Caco-2 (cell line): ENCODE measurements at regions of chr4 and their contacts with region 1.

Region 1: GRCh38 chr4:54228056-54228527 is 1.0 kb upstream of the PDGFRA start:
- DNase-seq: peak; percentile 85 to 90
- H3K4me3 ChIP-seq: peak overlapping the region; percentile 64
- H3K4me3 Mint-ChIP-seq: peak overlapping the region; percentile 87
- H3K27ac Mint-ChIP-seq: peak overlapping the region; percentile 79
- H3K4me1 ChIP-seq: peaks cover 9% of the 10 kb centered on the region; the same call in 1 of the 2 replicates
- H3K4me1 Mint-ChIP-seq: peaks cover 13% of the 10 kb centered on the region
- H3K27me3 ChIP-seq: no peaks in the 10 kb centered on the region
- H3K27me3 Mint-ChIP-seq: no peaks in the 10 kb centered on the region
- CTCF ChIP-seq: peak; percentile 87 to 89

Region 2: DNA sequence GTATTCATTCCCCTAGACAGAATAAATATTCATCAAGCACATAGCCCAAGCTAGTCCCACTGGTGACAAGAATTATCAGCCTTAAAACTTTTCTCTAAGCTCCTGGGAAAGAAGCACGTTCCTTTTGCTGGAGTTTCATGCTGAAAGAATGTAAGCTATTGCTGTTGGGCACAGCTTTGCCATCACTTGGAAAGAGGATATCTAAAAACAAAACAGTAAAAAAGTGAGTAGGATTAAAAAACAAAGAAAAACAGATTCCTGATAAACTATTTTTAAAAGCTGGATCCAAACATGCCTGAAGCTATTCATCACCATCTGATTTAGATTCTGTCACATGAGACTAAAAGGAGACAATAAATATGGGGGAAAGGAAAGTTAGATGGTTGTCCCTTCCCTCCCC is 1039.1 kb before region 1 on chr4:
- CTCF ChIA-PET with region 1: no interaction called
- POLR2A ChIA-PET with region 1: no interaction called
- intact Hi-C with region 1: loop called (anchors 2 kb)
- DNase-seq: no peak
- H3K4me3 ChIP-seq: no peak overlapping the region
- H3K4me3 Mint-ChIP-seq: no peak overlapping the region
- H3K27ac Mint-ChIP-seq: no peak overlapping the region
- H3K4me1 ChIP-seq: peaks cover 30% of the 10 kb centered on the region
- H3K4me1 Mint-ChIP-seq: peaks cover 20% of the 10 kb centered on the region
- H3K27me3 ChIP-seq: no peaks in the 10 kb centered on the region
- H3K27me3 Mint-ChIP-seq: no peaks in the 10 kb centered on the region
- CTCF ChIP-seq: no peak

Region 3: GRCh38 chr4:53490965-53491622 is 737.0 kb before region 1 on chr4:
- CTCF ChIA-PET with region 1: no interaction called
- POLR2A ChIA-PET with region 1: no interaction called
- intact Hi-C with region 1: loop called (anchors 2 kb)
- DNase-seq: peak; percentile 49
- H3K4me3 ChIP-seq: no peak overlapping the region
- H3K4me3 Mint-ChIP-seq: no peak overlapping the region
- H3K27ac Mint-ChIP-seq: no peak overlapping the region
- H3K4me1 ChIP-seq: no peaks in the 10 kb centered on the region
- H3K4me1 Mint-ChIP-seq: no peaks in the 10 kb centered on the region
- H3K27me3 ChIP-seq: no peaks in the 10 kb centered on the region
- H3K27me3 Mint-ChIP-seq: no peaks in the 10 kb centered on the region
- CTCF ChIP-seq: peak; percentile 53 to 71

Region 4: GRCh38 chr4:53702334-53703266 is 525.5 kb before region 1 on chr4:
- CTCF ChIA-PET with region 1: interaction called, 5 read pairs
- POLR2A ChIA-PET with region 1: no interaction called
- intact Hi-C with region 1: loop called (anchors 2 kb)
- DNase-seq: no peak
- H3K4me3 ChIP-seq: no peak overlapping the region
- H3K4me3 Mint-ChIP-seq: no peak overlapping the region
- H3K27ac Mint-ChIP-seq: no peak overlapping the region
- H3K4me1 ChIP-seq: no peaks in the 10 kb centered on the region
- H3K4me1 Mint-ChIP-seq: peaks cover 9% of the 10 kb centered on the region
- H3K27me3 ChIP-seq: no peaks in the 10 kb centered on the region
- H3K27me3 Mint-ChIP-seq: no peaks in the 10 kb centered on the region
- CTCF ChIP-seq: no peak

Region 5: GRCh38 chr4:53804719-53805118 is 423.4 kb before region 1 on chr4:
- CTCF ChIA-PET with region 1: interaction called, 3 read pairs
- POLR2A ChIA-PET with region 1: no interaction called
- intact Hi-C with region 1: loop called (anchors 2 kb)
- DNase-seq: peak; percentile 47 to 52
- H3K4me3 ChIP-seq: no peak overlapping the region
- H3K4me3 Mint-ChIP-seq: no peak overlapping the region
- H3K27ac Mint-ChIP-seq: no peak overlapping the region
- H3K4me1 ChIP-seq: peaks cover 7% of the 10 kb centered on the region; the same call in 1 of the 2 replicates
- H3K4me1 Mint-ChIP-seq: peaks cover 17% of the 10 kb centered on the region
- H3K27me3 ChIP-seq: no peaks in the 10 kb centered on the region
- H3K27me3 Mint-ChIP-seq: no peaks in the 10 kb centered on the region
- CTCF ChIP-seq: peak; percentile 45 to 62

Region 6: DNA sequence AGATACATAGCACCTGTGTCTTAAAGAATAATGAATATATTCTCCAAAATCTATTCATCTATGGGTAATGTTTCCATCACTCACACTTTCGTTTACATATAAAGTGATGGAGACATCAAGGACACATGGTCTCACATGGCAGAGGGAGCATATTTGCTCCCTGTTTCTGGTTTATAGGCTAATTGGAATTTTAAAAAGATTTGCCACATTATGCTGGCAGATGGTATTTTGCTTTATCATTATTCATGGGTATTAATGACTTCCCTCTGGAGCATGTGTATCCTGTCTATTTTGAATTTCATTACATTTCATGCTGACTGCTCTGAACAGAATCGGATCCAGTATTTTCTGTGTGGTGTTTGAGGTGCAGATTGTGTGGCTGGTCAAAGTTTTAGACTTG is 80.0 kb after region 1 on chr4:
- CTCF ChIA-PET with region 1: no interaction called
- POLR2A ChIA-PET with region 1: no interaction called
- intact Hi-C with region 1: no loop called
- DNase-seq: no peak
- H3K4me3 ChIP-seq: no peak overlapping the region
- H3K4me3 Mint-ChIP-seq: no peak overlapping the region
- H3K27ac Mint-ChIP-seq: no peak overlapping the region
- H3K4me1 ChIP-seq: no peaks in the 10 kb centered on the region
- H3K4me1 Mint-ChIP-seq: peaks cover 7% of the 10 kb centered on the region
- H3K27me3 ChIP-seq: no peaks in the 10 kb centered on the region
- H3K27me3 Mint-ChIP-seq: peaks cover 7% of the 10 kb centered on the region
- CTCF ChIP-seq: no peak

Region 7: DNA sequence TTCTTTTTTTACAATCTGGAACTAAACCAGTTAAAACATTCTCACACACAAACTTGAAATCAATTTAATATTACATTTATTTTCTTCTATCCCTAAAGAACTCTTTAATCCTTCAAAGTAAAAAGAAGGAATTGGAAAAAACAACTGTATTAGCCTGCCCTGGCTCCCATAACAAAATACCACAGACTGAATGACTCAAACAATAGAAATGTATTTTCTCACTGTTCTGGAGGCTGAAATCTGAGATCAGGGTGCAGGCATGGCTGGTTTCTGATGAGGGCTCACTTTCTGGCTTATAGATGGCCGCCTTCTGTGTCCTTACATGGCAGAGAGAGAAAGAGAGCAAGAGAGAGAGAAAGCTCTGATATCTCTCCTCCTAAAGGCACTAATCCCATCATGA is 150.4 kb after region 1 on chr4:
- CTCF ChIA-PET with region 1: no interaction called
- POLR2A ChIA-PET with region 1: no interaction called
- intact Hi-C with region 1: no loop called
- DNase-seq: no peak
- H3K4me3 ChIP-seq: no peak overlapping the region
- H3K4me3 Mint-ChIP-seq: no peak overlapping the region
- H3K27ac Mint-ChIP-seq: no peak overlapping the region
- H3K4me1 ChIP-seq: no peaks in the 10 kb centered on the region
- H3K4me1 Mint-ChIP-seq: no peaks in the 10 kb centered on the region
- H3K27me3 ChIP-seq: no peaks in the 10 kb centered on the region
- H3K27me3 Mint-ChIP-seq: peaks cover 2% of the 10 kb centered on the region
- CTCF ChIP-seq: no peak

Region 8: GRCh38 chr4:54669831-54670230 is 441.7 kb after region 1 on chr4:
- CTCF ChIA-PET with region 1: no interaction called
- POLR2A ChIA-PET with region 1: no interaction called
- intact Hi-C with region 1: no loop called
- DNase-seq: no peak
- H3K4me3 ChIP-seq: no peak overlapping the region
- H3K4me3 Mint-ChIP-seq: no peak overlapping the region
- H3K27ac Mint-ChIP-seq: no peak overlapping the region
- H3K4me1 ChIP-seq: no peaks in the 10 kb centered on the region
- H3K4me1 Mint-ChIP-seq: no peaks in the 10 kb centered on the region
- H3K27me3 ChIP-seq: no peaks in the 10 kb centered on the region
- H3K27me3 Mint-ChIP-seq: peaks cover 19% of the 10 kb centered on the region
- CTCF ChIP-seq: peak in 1 of 2 experiments; percentile 41